Esophagus muscularis mucosa (tissue), 4 donors: ENCODE measurements at regions of chr7 and their contacts with region 1.

Region 1: DNA sequence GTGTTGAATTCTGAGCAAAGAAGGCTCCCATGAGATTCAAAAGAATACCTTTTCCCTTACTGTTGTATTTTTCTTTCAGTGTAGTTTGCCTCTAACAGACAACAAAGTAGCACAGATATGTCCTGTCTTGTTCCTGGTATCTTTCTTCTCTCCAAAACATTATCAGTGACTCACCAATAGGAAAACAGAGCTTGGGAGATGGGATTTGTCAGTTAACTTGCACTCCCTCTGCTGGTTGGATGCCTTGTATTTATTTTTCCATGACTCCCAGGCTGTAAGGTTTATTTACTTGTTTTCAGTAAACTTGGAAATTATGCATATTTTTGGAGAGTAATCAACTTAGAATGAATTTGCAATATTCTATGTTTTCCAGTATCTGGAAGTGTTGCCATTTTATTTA is 129.7 kb downstream of the SAMD9 start:
- DNase-seq: no peak
- H3K4me3 ChIP-seq: no peak overlapping the region
- H3K27ac ChIP-seq: no peak overlapping the region
- H3K4me1 ChIP-seq: peaks cover 0 to 5% (median 0%) of the 10 kb centered on the region in 4 donors
- H3K27me3 ChIP-seq: no peaks in the 10 kb centered on the region
- CTCF ChIP-seq: peak; percentile 17 to 44 (median 23)
- EP300 ChIP-seq: no peak
- POLR2A ChIP-seq: no peak

Region 2: DNA sequence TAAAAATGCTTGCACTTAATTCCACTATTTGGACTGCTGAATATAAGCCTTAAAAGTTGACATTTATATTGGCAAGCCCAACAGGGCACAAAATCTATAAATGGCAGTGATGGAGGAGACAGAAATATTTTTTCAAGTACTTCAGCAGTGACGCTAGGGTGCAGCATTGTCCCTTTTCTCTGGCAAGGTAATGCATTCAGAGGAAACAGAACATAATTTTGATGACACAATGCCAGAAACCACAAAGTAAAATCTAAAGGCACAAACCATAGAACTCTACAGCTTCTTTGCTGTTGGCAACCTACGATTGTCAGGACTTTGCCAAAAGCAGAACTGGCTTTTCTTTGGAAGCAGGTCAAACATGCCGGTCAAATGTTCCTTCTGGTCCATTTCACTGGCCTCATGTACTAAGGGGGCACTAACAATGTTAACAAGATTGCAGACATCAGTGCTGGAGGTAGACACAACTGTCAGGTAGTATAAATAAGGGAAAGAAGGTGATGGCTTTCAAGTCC is 367.0 kb before region 1 on chr7:
- intact Hi-C with region 1: loop called (anchors 5 kb)
- DNase-seq: no peak
- H3K4me3 ChIP-seq: no peak overlapping the region
- H3K27ac ChIP-seq: peak overlapping the region; percentile 46 to 69 (median 57)
- H3K4me1 ChIP-seq: peaks cover 13 to 27% (median 24%) of the 10 kb centered on the region in 4 donors
- H3K27me3 ChIP-seq: no peaks in the 10 kb centered on the region
- CTCF ChIP-seq: peak; percentile 75 to 81 (median 80)
- EP300 ChIP-seq: no peak
- POLR2A ChIP-seq: no peak